Transverse colon (tissue), 4 donors: ENCODE measurements at regions of chr12 and their contacts with region 1.

Region 1: DNA sequence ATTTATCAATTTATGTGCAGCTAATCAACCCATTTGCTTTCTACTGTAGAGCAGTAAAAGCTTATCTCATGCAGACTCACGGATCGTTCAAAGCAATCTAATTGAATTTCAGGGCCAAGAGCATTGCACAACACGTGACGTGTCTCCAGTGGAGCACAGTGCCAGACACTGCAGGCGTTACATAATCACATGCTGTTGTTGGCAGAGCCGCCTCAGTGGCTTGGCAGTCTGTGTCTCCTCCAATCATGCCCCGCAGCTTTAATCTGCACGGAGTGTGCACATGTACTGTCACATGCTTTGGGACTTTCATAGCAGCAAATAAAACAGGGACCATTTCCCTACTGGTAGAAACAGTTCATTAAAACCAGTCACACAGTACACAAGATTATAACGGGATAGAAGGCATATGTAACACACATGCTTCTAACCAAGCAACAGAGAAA is 309.3 kb downstream of the ITPR2 start:
- DNase-seq: peak; percentile 90
- H3K4me3 ChIP-seq: no peak overlapping the region
- H3K27ac ChIP-seq: peak overlapping the region; percentile 21 to 49 (median 40)
- H3K4me1 ChIP-seq: peaks cover 0 to 12% (median 5%) of the 10 kb centered on the region in 4 donors
- H3K27me3 ChIP-seq: no peaks in the 10 kb centered on the region
- CTCF ChIP-seq: peak in 2 of 5 experiments; percentile 43 to 58
- EP300 ChIP-seq: peak; percentile 63
- POLR2A ChIP-seq: no peak

Region 2: DNA sequence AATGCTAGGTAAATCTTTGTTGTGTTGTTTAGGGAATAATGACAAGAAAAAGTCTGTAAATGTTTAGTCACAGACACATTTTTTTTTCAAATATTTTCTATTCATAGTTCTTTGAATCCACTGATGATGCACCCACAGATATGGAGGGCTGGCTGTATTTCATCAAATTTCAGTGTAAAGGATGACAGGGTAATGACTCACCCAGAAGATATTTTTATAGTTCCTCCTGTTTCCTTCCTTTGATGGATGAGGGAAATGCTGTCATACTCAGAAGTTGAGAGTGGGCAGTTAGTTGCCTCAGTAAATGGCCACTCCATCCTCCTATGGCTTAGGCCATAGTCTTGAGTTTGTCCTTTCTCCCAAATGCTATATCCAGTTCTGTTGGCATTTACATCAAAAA is 1095.6 kb after region 1 on chr12:
- in situ Hi-C with region 1: no loop called
- intact Hi-C with region 1: loop called (anchors 10 kb)
- DNase-seq: no peak
- H3K4me3 ChIP-seq: no peak overlapping the region
- H3K27ac ChIP-seq: no peak overlapping the region
- H3K4me1 ChIP-seq: no peaks in the 10 kb centered on the region
- H3K27me3 ChIP-seq: no peaks in the 10 kb centered on the region
- CTCF ChIP-seq: no peak
- EP300 ChIP-seq: no peak
- POLR2A ChIP-seq: no peak